HEK293 (cell line): ENCODE measurements at regions of chr5 and their contacts with region 1.

Region 1: GRCh38 chr5:136212252-136212721 is 19.3 kb upstream of the SMIM32 start:
- H3K4me3 ChIP-seq: no peak overlapping the region
- H3K27ac ChIP-seq: no peak overlapping the region
- H3K4me1 ChIP-seq: no peaks in the 10 kb centered on the region
- CTCF ChIP-seq: peak; percentile 63

Region 2: GRCh38 chr5:135399524-135400205 is 812.6 kb before region 1 on chr5:
- CTCF ChIA-PET with region 1: no interaction called
- POLR2A ChIA-PET with region 1: no interaction called
- H3K4me3 ChIP-seq: peak overlapping the region; percentile 87
- H3K27ac ChIP-seq: peak overlapping the region; percentile 95
- H3K4me1 ChIP-seq: peaks cover 21% of the 10 kb centered on the region
- CTCF ChIP-seq: no peak

Region 3: GRCh38 chr5:135887351-135887864 is 324.9 kb before region 1 on chr5:
- CTCF ChIA-PET with region 1: interaction called, 43 read pairs
- POLR2A ChIA-PET with region 1: no interaction called
- H3K4me3 ChIP-seq: no peak overlapping the region
- H3K27ac ChIP-seq: no peak overlapping the region
- H3K4me1 ChIP-seq: peaks cover 12% of the 10 kb centered on the region
- CTCF ChIP-seq: peak; percentile 88

Region 4: GRCh38 chr5:136155761-136156160 is 56.5 kb before region 1 on chr5:
- CTCF ChIA-PET with region 1: interaction called, 12 read pairs
- POLR2A ChIA-PET with region 1: no interaction called
- H3K4me3 ChIP-seq: no peak overlapping the region
- H3K27ac ChIP-seq: no peak overlapping the region
- H3K4me1 ChIP-seq: peaks cover 9% of the 10 kb centered on the region
- CTCF ChIP-seq: no peak

Region 5: GRCh38 chr5:136199408-136199807 is 12.9 kb before region 1 on chr5:
- CTCF ChIA-PET with region 1: interaction called, 18 read pairs
- POLR2A ChIA-PET with region 1: no interaction called
- H3K4me3 ChIP-seq: no peak overlapping the region
- H3K27ac ChIP-seq: no peak overlapping the region
- H3K4me1 ChIP-seq: no peaks in the 10 kb centered on the region
- CTCF ChIP-seq: no peak